Aorta (tissue), 5 donors: ENCODE measurements at regions of chr4 and their contacts with region 1.

Region 1: GRCh38 chr4:16264798-16265197 is 38.5 kb upstream of the TAPT1 start:
- DNase-seq: no peak
- ATAC-seq: no peak
- H3K4me3 ChIP-seq: no peak overlapping the region
- H3K27ac ChIP-seq: no peak overlapping the region
- H3K4me1 ChIP-seq: peaks cover 2 to 4% of the 10 kb centered on the region in 2 donors
- H3K27me3 ChIP-seq: no peaks in the 10 kb centered on the region

Region 2: GRCh38 chr4:15805583-15806517 is 458.9 kb before region 1 on chr4:
- intact Hi-C with region 1: loop called in 1 of 2 experiments (anchors 10 kb)
- DNase-seq: no peak
- ATAC-seq: peak; percentile 66
- H3K4me3 ChIP-seq: no peak overlapping the region
- H3K27ac ChIP-seq: no peak overlapping the region
- H3K4me1 ChIP-seq: no peaks in the 10 kb centered on the region
- H3K27me3 ChIP-seq: no peaks in the 10 kb centered on the region

Region 3: DNA sequence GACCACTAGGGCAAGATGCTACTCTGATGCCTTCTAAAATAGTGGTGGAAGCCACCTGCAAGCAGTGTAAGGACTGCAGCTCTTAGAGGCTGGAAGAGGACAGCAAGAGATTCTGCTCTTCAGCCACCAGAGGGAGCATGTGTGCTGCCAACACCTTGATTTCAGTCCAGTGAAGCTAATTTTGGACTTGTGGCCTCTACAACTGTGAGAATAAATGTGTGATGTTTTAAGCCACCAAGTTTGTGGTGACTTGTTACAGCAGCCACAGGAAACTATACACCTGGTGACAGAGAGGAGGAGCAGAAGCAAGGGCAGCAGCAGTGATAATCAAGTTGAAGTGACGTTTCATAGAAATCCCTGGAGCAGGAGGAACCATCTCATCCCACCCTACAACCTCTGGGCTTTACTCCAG is 382.1 kb before region 1 on chr4:
- intact Hi-C with region 1: loop called in 1 of 2 experiments (anchors 5 kb)
- DNase-seq: peak in 1 of 2 donors; percentile 53
- ATAC-seq: peak; percentile 88
- H3K4me3 ChIP-seq: no peak overlapping the region
- H3K27ac ChIP-seq: no peak overlapping the region
- H3K4me1 ChIP-seq: no peaks in the 10 kb centered on the region
- H3K27me3 ChIP-seq: no peaks in the 10 kb centered on the region

Region 4: DNA sequence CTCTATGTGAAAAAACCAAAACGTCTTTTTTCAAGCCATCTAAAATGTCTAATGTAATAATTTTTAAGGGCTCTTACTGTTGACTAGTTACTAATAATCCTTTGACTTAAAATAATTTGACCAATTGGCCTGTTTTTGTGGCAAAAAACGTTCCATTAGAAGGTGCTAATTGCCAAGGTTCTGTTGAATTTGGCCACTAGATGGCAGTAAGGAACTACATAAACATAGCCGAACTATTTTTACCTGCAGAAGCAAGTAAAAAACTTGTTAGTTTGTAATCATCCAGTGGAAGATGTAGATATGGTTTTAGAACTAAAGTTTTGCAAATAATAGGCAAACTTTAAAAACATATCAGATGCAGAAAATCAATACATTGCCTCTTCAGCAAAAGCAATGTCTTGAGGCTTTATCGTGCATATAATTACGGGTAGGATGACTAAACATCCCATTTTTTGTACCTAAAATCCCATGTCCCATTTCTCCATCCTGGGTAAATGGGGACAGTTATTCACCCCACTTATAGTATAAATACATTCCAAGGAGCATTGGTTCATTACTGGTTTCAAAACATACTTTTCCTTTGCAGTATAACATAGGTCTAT is 238.5 kb before region 1 on chr4:
- intact Hi-C with region 1: loop called (anchors 2 to 5 kb)
- DNase-seq: no peak
- ATAC-seq: no peak
- H3K4me3 ChIP-seq: no peak overlapping the region
- H3K27ac ChIP-seq: no peak overlapping the region
- H3K4me1 ChIP-seq: no peaks in the 10 kb centered on the region
- H3K27me3 ChIP-seq: no peaks in the 10 kb centered on the region

Region 5: GRCh38 chr4:16196478-16197393 is 68.1 kb before region 1 on chr4:
- intact Hi-C with region 1: loop called (anchors 5 kb)
- DNase-seq: no peak
- ATAC-seq: peak; percentile 83
- H3K4me3 ChIP-seq: peak overlapping the region; percentile 26 to 84
- H3K27ac ChIP-seq: peak overlapping the region in 1 of 2 donors; percentile 87
- H3K4me1 ChIP-seq: peaks cover 0 to 4% of the 10 kb centered on the region in 2 donors
- H3K27me3 ChIP-seq: no peaks in the 10 kb centered on the region